SK-N-SH (cell line): ENCODE measurements at regions of chr5 and their contacts with region 1.

Region 1: DNA sequence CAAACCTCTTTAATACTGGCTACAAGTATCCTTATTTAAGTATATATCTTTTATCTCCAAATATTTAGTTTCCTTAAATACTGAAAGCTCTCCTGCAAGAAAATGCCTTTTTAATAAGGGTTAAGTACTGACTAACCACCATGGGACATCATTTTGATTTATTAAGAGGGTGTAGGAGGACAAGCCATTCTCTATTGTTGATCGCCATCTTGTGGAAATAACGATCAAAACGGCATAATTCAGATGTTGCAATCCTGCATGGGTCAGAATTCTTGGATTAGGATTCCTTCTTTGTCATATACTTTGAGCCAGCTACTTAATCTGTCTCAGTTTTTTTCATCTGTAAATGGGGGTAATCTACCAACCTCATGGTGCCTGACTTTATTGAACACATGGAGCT is 28.7 kb upstream of the C5orf46 start:
- DNase-seq: peak; percentile 53
- H3K4me3 ChIP-seq: no peak overlapping the region
- H3K27ac ChIP-seq: no peak overlapping the region
- H3K4me1 ChIP-seq: no peaks in the 10 kb centered on the region; a peak in 1 of 4 replicates
- H3K27me3 ChIP-seq: no peaks in the 10 kb centered on the region
- CTCF ChIP-seq: peak; percentile 77
- EP300 ChIP-seq: no peak
- RAD21 ChIP-seq: peak; percentile 82

Region 2: DNA sequence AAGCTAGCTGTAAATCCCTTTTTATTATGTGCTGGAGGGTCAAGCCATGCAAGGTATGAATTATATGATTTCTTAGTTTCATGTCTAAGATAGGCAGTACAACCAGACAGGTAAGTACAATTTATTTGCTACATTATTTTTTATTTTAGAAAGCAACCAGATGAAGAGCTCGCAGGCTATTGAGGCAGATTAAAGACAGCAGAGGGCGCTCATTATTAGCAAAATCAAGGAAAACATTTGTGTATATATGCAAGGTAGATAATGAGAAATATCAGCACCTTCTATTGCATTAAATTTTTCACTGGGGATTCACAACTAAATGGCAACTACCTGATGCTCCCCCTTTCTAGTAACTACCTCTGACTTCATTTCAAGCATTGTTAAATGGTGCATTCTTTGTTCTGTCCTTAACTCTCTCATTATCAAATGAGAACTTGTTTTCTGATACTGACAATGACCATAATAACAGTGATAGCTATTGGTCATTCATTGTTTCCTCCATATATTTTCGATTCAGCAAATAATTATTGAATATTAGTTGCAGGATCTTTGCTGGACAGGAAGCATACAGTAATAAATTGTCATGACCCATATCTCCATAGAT is 47.9 kb before region 1 on chr5:
- CTCF ChIA-PET with region 1: interaction called, 75 read pairs
- POLR2A ChIA-PET with region 1: no interaction called
- DNase-seq: peak; percentile 3
- H3K4me3 ChIP-seq: no peak overlapping the region; a peak in 1 of 4 replicates
- H3K27ac ChIP-seq: no peak overlapping the region; a peak in 1 of 4 replicates
- H3K4me1 ChIP-seq: no peaks in the 10 kb centered on the region; a peak in 1 of 4 replicates
- H3K27me3 ChIP-seq: no peaks in the 10 kb centered on the region
- CTCF ChIP-seq: peak; percentile 87
- EP300 ChIP-seq: no peak
- RAD21 ChIP-seq: peak; percentile 69

Region 3: DNA sequence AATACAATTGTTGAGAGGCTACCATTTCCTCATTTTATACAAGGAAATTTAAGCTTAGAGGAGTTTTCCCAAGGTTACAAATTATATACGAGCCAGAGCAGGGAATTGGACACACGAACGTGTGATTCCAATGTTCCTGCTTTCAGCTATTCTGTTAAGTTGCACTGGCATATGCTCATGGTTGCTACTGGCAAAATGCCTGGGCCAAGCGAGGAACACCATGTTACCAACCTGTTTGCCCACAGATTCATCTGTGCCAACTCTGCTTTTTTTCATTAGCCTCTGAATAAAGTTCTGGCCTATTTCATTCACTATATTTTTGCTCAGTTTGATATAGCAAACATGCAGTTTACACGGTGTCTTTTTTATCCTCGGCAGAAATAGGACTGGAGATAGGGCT is 23.6 kb before region 1 on chr5:
- CTCF ChIA-PET with region 1: interaction called, 16 read pairs
- POLR2A ChIA-PET with region 1: no interaction called
- DNase-seq: no peak
- H3K4me3 ChIP-seq: no peak overlapping the region
- H3K27ac ChIP-seq: no peak overlapping the region
- H3K4me1 ChIP-seq: peaks cover 0 to 6% of the 10 kb centered on the region in 2 experiments; a peak in 2 of 4 replicates
- H3K27me3 ChIP-seq: no peaks in the 10 kb centered on the region
- CTCF ChIP-seq: no peak
- EP300 ChIP-seq: no peak
- RAD21 ChIP-seq: no peak